Right cardiac atrium (tissue), 5 donors: ENCODE measurements at regions of chr20 and their contacts with region 1.

Region 1: DNA sequence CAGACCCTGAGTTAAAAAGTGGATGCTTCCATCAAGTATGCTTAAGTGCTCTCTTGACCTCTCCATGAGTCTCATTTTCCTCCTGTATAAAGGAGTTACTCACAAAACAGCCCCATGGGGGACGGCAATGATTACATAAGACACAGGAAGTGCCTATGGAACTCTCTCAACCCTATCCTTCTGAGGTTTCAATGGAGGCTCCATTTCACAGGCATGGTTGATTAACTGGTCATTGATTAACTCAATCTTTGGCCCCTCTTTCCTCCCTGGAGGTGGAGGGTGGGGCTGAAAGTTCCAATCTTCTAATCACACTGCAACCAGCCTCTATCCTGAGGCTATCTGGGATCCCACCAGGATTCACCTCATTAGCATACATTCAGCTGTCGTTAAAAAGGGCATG is 29.3 kb downstream of the CST8 start:
- DNase-seq: no peak
- ATAC-seq: no peak
- H3K4me3 ChIP-seq: no peak overlapping the region
- H3K27ac ChIP-seq: no peak overlapping the region
- H3K4me1 ChIP-seq: no peaks in the 10 kb centered on the region
- H3K27me3 ChIP-seq: no peaks in the 10 kb centered on the region

Region 2: GRCh38 chr20:24608926-24609667 is 1088.9 kb after region 1 on chr20:
- intact Hi-C with region 1: loop called in 1 of 4 experiments (anchors 10 kb)
- DNase-seq: no peak
- ATAC-seq: no peak
- H3K4me3 ChIP-seq: no peak overlapping the region
- H3K27ac ChIP-seq: no peak overlapping the region
- H3K4me1 ChIP-seq: peaks cover 7% of the 10 kb centered on the region
- H3K27me3 ChIP-seq: no peaks in the 10 kb centered on the region